A549 (cell line): ENCODE measurements at regions of chr1 and their contacts with region 1.

Region 1: DNA sequence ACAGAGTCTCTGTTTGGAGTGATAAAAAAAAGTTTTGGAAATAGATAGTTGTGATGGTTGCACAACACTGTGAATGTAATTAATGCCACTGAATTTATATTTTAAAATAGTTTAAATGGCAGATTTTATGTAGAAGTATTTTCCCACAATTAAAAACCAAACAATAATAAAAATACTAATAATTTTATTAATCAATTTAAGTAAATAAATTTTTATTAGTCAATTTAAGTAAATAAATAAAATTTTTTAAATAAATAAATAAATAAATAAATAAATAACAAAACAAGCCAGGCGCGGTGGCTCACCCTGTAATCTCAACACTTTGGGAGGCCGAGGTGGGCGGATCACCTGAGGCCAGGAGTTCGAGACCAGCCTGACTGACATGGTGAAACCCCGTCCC is 4.9 kb upstream of the KDF1 start:
- DNase-seq: no peak
- ATAC-seq: no peak
- H3K4me3 ChIP-seq: no peak overlapping the region
- H3K27ac ChIP-seq: no peak overlapping the region; a peak in 1 of 6 replicates
- H3K4me1 ChIP-seq: peaks cover 39% of the 10 kb centered on the region
- CTCF ChIP-seq: no peak
- EP300 ChIP-seq: no peak
- POLR2A ChIP-seq: no peak
- RAD21 ChIP-seq: no peak

Region 2: DNA sequence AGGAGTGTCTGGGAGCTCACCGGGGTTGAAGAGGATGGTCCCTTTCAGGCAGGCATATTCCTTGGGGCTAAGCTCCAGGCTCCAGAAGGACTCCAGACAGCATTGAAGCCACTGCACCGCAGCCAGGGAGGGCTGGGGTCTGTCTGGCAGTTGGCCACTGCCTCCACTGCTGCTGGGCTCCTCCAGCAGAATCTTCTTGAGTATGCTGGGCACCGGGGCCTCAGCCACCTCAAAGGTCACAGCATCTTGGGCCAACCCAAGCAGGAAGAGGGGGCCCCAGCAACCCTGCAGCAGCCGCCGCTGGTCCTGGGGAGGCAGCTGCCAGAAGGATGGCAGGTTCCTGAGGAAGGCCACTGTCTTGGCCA is 51.8 kb before region 1 on chr1:
- CTCF ChIA-PET with region 1: no interaction called
- POLR2A ChIA-PET with region 1: no interaction called
- DNase-seq: no peak
- ATAC-seq: no peak
- H3K4me3 ChIP-seq: no peak overlapping the region
- H3K27ac ChIP-seq: peak overlapping the region in 1 of 2 experiments; percentile 62; a peak in 2 of 6 replicates
- H3K4me1 ChIP-seq: peaks cover 22% of the 10 kb centered on the region
- CTCF ChIP-seq: no peak
- EP300 ChIP-seq: no peak
- POLR2A ChIP-seq: no peak
- RAD21 ChIP-seq: no peak

Region 3: DNA sequence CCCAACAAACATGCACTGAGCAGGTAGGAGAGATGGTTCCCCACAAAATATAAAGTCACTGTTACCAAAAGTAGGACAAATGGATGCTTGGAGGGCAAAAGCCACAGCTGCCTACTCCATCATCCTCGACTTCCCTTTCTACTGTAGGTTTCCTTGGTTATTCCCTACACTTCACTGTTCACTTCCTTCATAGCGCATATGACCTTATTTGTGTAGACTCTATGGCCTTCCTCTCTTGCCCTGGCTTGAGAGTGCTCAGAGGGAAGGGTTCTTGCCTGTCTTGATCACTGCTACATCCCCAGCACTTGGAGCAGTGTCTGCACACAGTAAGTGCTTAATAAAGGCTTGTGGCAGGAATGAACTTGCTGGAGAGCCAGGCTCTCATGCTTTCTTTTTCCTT is 13.7 kb after region 1 on chr1:
- CTCF ChIA-PET with region 1: interaction called, 78 read pairs
- POLR2A ChIA-PET with region 1: no interaction called
- DNase-seq: no peak
- ATAC-seq: no peak
- H3K4me3 ChIP-seq: no peak overlapping the region
- H3K27ac ChIP-seq: no peak overlapping the region
- H3K4me1 ChIP-seq: no peaks in the 10 kb centered on the region; the same call in 2 of the 3 replicates
- CTCF ChIP-seq: no peak
- EP300 ChIP-seq: no peak
- POLR2A ChIP-seq: no peak
- RAD21 ChIP-seq: no peak

Region 4: GRCh38 chr1:26993237-26994019 is 28.2 kb after region 1 on chr1 and contains the start of gene TRNP1:
- CTCF ChIA-PET with region 1: interaction called, 188 read pairs
- POLR2A ChIA-PET with region 1: interaction called, 8 read pairs
- DNase-seq: peak; percentile 77 to 91
- ATAC-seq: peak; percentile 36 to 56
- H3K4me3 ChIP-seq: peak within 1 kb of the TSS; percentile 96
- H3K27ac ChIP-seq: peak within 1 kb of the TSS; percentile 100
- H3K4me1 ChIP-seq: peaks cover 53% of the 10 kb centered on the region
- CTCF ChIP-seq: no peak
- EP300 ChIP-seq: no peak
- POLR2A ChIP-seq: peak; percentile 99
- RAD21 ChIP-seq: 0 out of 5 replicates have a peak, but pooled peaks of 1 of the 2 experiments have one; percentile 17
- polyA plus RNA-seq, gene TRNP1: 113 and 134 TPM in 2 replicates

Region 5: GRCh38 chr1:27010989-27011764 is 46.0 kb after region 1 on chr1:
- CTCF ChIA-PET with region 1: interaction called, 51 read pairs
- POLR2A ChIA-PET with region 1: no interaction called
- DNase-seq: peak; percentile 81 to 83
- ATAC-seq: peak; percentile 30 to 38
- H3K4me3 ChIP-seq: no peak overlapping the region
- H3K27ac ChIP-seq: peak overlapping the region; percentile 72 to 83
- H3K4me1 ChIP-seq: peaks cover 53% of the 10 kb centered on the region
- CTCF ChIP-seq: no peak
- EP300 ChIP-seq: no peak
- POLR2A ChIP-seq: no peak
- RAD21 ChIP-seq: 0 out of 5 replicates have a peak, but pooled peaks of 1 of the 2 experiments have one; percentile 15